ENCODE measurements at regions of chr12 and their contacts with region 1.

Region 1: DNA sequence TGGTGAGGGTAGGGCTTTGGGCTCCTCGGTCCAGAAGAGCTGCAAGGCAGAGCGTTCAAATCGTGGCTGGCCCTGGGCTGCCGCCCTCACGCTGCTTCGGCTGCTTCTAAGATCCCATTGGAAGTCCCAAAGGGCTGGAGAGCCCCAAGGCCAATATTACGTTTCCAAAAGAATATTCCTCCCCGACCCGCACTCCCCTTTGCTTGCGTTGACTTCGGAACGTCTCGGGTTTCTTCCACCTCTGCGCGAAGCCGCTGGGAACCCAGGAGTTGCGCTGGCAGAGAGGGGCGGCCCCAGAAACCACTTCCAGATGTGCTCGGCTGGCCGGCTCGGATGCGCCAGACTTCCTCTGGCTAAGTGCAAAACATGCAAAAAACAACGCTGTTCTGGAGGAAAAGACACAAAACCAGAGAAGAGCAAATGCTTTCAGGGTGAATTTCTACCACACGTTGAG is at the start of gene GLT8D2:
- DNase-seq: peak; percentile 41 to 69 (median 60)
- H3K4me3 ChIP-seq: peak within 1 kb of the TSS in 2 of 4 donors; percentile 11 to 55
- H3K27ac ChIP-seq: peak within 1 kb of the TSS in 4 of 5 donors; percentile 16 to 74 (median 30)
- H3K4me1 ChIP-seq: peaks cover 7 to 12% of the 10 kb centered on the region in 2 donors
- H3K27me3 ChIP-seq: no peaks in the 10 kb centered on the region
- CTCF ChIP-seq: no peak
- POLR2A ChIP-seq: no peak
- total RNA-seq, gene GLT8D2: 6.3 to 21.2 (median 13.9) TPM

Region 2: GRCh38 chr12:103401421-103401820 is 648.5 kb before region 1 on chr12:
- intact Hi-C with region 1: no loop called
- DNase-seq: no peak
- H3K4me3 ChIP-seq: no peak overlapping the region
- H3K27ac ChIP-seq: no peak overlapping the region
- H3K4me1 ChIP-seq: no peaks in the 10 kb centered on the region
- H3K27me3 ChIP-seq: no peaks in the 10 kb centered on the region
- CTCF ChIP-seq: no peak
- POLR2A ChIP-seq: no peak

Region 3: DNA sequence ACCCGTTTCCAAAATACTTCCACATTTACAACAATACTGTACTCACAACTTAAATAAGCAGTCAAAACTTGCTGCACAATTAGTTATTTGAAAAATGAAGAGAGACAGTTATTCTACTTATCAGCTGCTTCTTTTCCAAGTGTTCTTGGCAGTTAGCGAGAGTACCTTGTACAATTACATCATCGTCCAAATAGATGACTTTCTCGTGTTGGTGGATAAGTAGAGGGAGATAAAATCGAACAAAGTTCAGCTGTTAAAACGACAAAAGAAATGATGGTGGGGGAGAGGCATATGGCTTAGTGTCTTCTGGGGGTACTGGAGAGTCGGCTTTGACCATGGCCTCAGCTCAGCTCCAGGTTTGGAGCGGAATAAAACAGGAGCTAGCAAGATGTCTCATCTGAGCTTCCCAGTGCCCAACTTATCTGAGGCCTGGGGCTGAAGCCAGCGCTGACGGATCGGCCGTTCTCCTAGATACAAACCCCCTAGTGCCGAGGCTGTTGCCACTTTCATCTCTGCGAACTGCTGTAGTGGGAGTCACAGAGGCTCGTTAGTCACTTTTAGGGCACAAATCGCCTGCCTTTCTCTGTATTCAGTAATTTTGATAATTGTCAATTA is 52.5 kb before region 1 on chr12:
- intact Hi-C with region 1: loop called in 1 of 2 experiments (anchors 10 kb)
- DNase-seq: peak in 1 of 7 donors; percentile 16
- H3K4me3 ChIP-seq: no peak overlapping the region
- H3K27ac ChIP-seq: peak overlapping the region in 1 of 5 donors; percentile 3
- H3K4me1 ChIP-seq: no peaks in the 10 kb centered on the region
- H3K27me3 ChIP-seq: no peaks in the 10 kb centered on the region
- CTCF ChIP-seq: no peak
- POLR2A ChIP-seq: no peak